ENCODE measurements at regions of chr3 and their contacts with region 1.

Region 1: GRCh38 chr3:7346364-7346763 is 485.4 kb downstream of the GRM7 start:
- DNase-seq: peak; percentile 97
- H3K4me3 ChIP-seq: peak overlapping the region in 1 of 3 experiments; percentile 6
- H3K27ac ChIP-seq: peak overlapping the region; percentile 97
- H3K4me1 ChIP-seq: peaks cover 24% of the 10 kb centered on the region
- H3K27me3 ChIP-seq: no peaks in the 10 kb centered on the region
- CTCF ChIP-seq: no peak
- POLR2A ChIP-seq: peak; percentile 19

Region 2: GRCh38 chr3:7205962-7206361 is 140.4 kb before region 1 on chr3:
- CTCF ChIA-PET with region 1: no interaction called
- POLR2A ChIA-PET with region 1: no interaction called
- dilution Hi-C with region 1: no loop called
- intact Hi-C with region 1: loop called (anchors 1 kb)
- DNase-seq: no peak
- H3K4me3 ChIP-seq: peak overlapping the region; percentile 18 to 72 (median 50)
- H3K27ac ChIP-seq: peak overlapping the region; percentile 4
- H3K4me1 ChIP-seq: no peaks in the 10 kb centered on the region
- H3K27me3 ChIP-seq: no peaks in the 10 kb centered on the region
- CTCF ChIP-seq: no peak
- POLR2A ChIP-seq: no peak

Region 3: DNA sequence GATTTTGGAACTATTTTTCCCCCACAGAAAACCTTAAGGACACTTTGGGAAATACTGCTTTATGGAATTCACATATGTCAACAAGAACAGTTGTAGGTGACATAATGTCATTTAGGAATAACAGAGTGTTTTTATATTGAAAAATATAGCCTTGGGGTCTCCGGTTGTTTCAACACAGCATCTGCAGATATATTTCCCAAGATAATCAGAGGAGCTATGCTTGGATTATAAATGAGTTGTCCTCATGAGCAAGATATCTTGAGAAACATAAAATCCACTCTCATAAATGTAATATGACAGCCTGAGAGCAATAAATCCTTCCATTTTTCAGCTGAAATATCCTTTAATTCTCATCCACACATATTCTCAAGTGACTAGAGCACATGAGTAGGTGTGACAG is 681.6 kb after region 1 on chr3:
- CTCF ChIA-PET with region 1: no interaction called
- POLR2A ChIA-PET with region 1: no interaction called
- dilution Hi-C with region 1: no loop called
- intact Hi-C with region 1: no loop called
- DNase-seq: no peak
- H3K4me3 ChIP-seq: no peak overlapping the region
- H3K27ac ChIP-seq: no peak overlapping the region
- H3K4me1 ChIP-seq: no peaks in the 10 kb centered on the region
- H3K27me3 ChIP-seq: no peaks in the 10 kb centered on the region
- CTCF ChIP-seq: no peak
- POLR2A ChIP-seq: no peak

Measured in endothelial cell of umbilical vein (primary cell).